Activated B cell treated with CpG ODN at 0.5 μM for 24 hours (primary cell): ENCODE measurements at regions of chr19 and their contacts with region 1.

Region 1: GRCh38 chr19:10695401-10696398 is 5.5 kb upstream of the QTRT1 start:
- DNase-seq: peak; percentile 79
- ATAC-seq: peak; percentile 98
- H3K4me3 Mint-ChIP-seq: peak overlapping the region; percentile 76
- H3K27ac Mint-ChIP-seq: peak overlapping the region; percentile 26
- H3K4me1 Mint-ChIP-seq: peaks cover 17% of the 10 kb centered on the region
- H3K27me3 Mint-ChIP-seq: peaks cover 5% of the 10 kb centered on the region
- CTCF ChIP-seq: no peak

Region 2: GRCh38 chr19:10332955-10333757 is 362.5 kb before region 1 on chr19 and contains the start of gene RAVER1:
- CTCF ChIA-PET with region 1: no interaction called
- POLR2A ChIA-PET with region 1: no interaction called
- intact Hi-C with region 1: no loop called
- DNase-seq: peak; percentile 93
- ATAC-seq: peak; percentile 97
- H3K4me3 Mint-ChIP-seq: peak within 1 kb of the TSS; percentile 96
- H3K27ac Mint-ChIP-seq: peak within 1 kb of the TSS; percentile 96
- H3K4me1 Mint-ChIP-seq: peaks cover 26% of the 10 kb centered on the region
- H3K27me3 Mint-ChIP-seq: no peaks in the 10 kb centered on the region
- CTCF ChIP-seq: no peak
- total RNA-seq, gene RAVER1: 77.0 and 80.8 TPM in 2 replicates

Region 3: DNA sequence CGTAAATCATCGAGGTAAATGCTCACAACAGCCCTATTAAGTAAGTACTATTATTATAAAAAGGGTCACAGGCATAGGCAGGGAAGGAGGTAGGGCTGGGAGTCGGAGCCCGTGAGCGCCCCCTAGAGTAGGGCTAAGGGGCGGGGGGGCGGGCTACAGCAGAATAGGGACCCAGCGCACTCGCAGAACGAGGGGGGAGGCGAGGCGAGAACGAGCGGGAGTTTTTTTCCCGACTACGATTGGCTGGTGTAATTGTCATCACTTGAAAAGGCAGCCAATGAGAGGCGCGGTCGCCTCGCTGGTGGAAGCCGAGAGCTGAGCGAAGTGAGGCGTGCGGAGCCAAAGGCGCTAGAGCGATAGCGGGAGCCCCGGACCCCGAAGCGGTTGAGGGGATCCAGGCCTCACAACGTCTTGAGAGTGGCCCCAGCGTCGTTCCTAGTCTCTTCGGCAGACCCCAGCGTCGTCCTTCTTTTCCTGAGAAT is 216.8 kb before region 1 on chr19:
- CTCF ChIA-PET with region 1: interaction called, 3 read pairs
- POLR2A ChIA-PET with region 1: no interaction called
- intact Hi-C with region 1: loop called (anchors 2 kb)
- DNase-seq: peak; percentile 59
- ATAC-seq: peak; percentile 97
- H3K4me3 Mint-ChIP-seq: peak overlapping the region; percentile 32
- H3K27ac Mint-ChIP-seq: no peak overlapping the region
- H3K4me1 Mint-ChIP-seq: peaks cover 16% of the 10 kb centered on the region
- H3K27me3 Mint-ChIP-seq: no peaks in the 10 kb centered on the region
- CTCF ChIP-seq: no peak

Region 4: DNA sequence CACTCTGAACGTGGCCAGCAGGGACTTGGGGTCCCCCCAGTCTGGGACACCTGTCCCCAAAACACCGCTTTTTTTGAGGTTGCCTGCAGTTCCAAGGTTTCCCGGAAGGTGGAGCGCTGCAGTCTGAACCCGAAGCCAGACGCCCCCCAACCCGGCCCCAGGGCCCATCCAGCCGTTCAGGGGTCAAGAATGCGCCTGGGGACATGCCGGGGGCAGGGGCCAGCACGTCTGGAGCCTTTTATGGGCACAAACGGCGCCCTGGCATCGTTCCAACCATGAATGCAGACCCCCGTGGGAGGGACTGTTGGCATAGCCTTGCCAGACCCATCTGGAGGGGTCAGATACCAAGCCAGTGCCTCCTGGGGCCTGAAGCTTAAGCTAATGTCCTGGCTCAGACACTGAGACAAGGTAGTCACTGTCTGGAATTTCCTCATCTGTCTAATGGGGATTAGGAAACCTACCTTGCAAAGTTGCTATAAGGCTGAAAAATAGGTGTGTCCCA is 185.3 kb before region 1 on chr19:
- CTCF ChIA-PET with region 1: interaction called, 5 read pairs
- POLR2A ChIA-PET with region 1: no interaction called
- intact Hi-C with region 1: loop called (anchors 5 kb)
- DNase-seq: peak; percentile 61
- ATAC-seq: peak; percentile 38
- H3K4me3 Mint-ChIP-seq: no peak overlapping the region
- H3K27ac Mint-ChIP-seq: no peak overlapping the region
- H3K4me1 Mint-ChIP-seq: peaks cover 13% of the 10 kb centered on the region
- H3K27me3 Mint-ChIP-seq: peaks cover 16% of the 10 kb centered on the region
- CTCF ChIP-seq: peak; percentile 35

Region 5: GRCh38 chr19:10580979-10581631 is 114.6 kb before region 1 on chr19:
- CTCF ChIA-PET with region 1: interaction called, 44 read pairs
- POLR2A ChIA-PET with region 1: interaction called, 7 read pairs
- intact Hi-C with region 1: loop called (anchors 1 kb)
- DNase-seq: peak; percentile 80
- ATAC-seq: peak; percentile 100
- H3K4me3 Mint-ChIP-seq: no peak overlapping the region
- H3K27ac Mint-ChIP-seq: no peak overlapping the region
- H3K4me1 Mint-ChIP-seq: peaks cover 16% of the 10 kb centered on the region
- H3K27me3 Mint-ChIP-seq: no peaks in the 10 kb centered on the region
- CTCF ChIP-seq: peak; percentile 73